Activated B cell treated with CpG ODN at 0.5 μM for 24 hours (primary cell): ENCODE measurements at regions of chr5 and their contacts with region 1.

Region 1: DNA sequence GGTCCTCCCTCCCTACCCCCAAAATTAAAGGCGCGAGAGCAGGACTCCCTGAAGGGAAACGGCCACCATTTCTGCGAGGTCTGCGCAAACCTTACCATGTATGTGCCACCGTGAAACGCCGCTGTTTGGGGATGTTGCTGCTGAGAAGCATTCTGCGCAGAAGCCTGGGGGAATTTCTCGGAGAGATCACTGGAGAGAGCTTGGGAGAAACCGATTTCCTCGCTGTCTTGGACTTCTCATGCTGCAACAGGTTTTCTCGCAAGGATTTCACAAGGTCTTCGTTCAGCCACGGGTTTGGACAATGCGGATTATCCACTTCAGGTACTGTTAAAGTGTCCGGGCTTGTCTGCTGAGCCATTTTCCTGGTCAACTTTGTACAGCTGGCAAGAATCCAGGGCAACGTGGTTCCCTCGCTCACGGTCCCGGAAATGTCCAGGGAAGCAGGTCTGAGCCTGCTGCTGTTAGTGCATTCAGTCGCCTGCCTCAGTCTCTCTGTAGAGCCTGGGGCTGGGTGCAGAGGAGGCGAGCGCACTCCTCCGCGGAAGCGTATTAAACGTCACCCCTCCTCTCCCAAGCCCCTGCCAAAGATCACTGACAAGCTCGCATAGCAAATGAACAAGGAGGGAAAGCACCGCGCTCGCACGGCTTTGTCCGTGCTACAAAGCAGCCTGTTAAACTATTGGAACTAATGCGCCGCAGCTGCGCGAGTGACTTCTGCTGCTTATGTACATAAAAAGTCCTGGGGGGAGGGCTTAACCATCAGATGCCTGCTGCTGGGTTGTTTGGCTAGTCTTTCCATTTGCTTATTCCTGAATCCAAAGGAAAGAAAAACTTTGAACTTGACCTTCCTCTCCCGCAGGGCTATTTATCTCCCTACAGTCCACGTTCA is 125.1 kb downstream of the PDE4D start:
- DNase-seq: peak; percentile 31
- ATAC-seq: peak; percentile 88
- H3K4me3 Mint-ChIP-seq: peak overlapping the region; percentile 91
- H3K27ac Mint-ChIP-seq: peak overlapping the region; percentile 79
- H3K4me1 Mint-ChIP-seq: peaks cover 55% of the 10 kb centered on the region
- H3K27me3 Mint-ChIP-seq: peaks cover 7% of the 10 kb centered on the region
- CTCF ChIP-seq: no peak

Region 2: GRCh38 chr5:59753599-59753998 is 14.8 kb before region 1 on chr5:
- CTCF ChIA-PET with region 1: no interaction called
- POLR2A ChIA-PET with region 1: no interaction called
- intact Hi-C with region 1: loop called (anchors 2 kb)
- DNase-seq: no peak
- ATAC-seq: no peak
- H3K4me3 Mint-ChIP-seq: no peak overlapping the region
- H3K27ac Mint-ChIP-seq: no peak overlapping the region
- H3K4me1 Mint-ChIP-seq: peaks cover 8% of the 10 kb centered on the region
- H3K27me3 Mint-ChIP-seq: no peaks in the 10 kb centered on the region
- CTCF ChIP-seq: no peak